ENCODE measurements at regions of chr4 and their contacts with region 1.

Region 1: DNA sequence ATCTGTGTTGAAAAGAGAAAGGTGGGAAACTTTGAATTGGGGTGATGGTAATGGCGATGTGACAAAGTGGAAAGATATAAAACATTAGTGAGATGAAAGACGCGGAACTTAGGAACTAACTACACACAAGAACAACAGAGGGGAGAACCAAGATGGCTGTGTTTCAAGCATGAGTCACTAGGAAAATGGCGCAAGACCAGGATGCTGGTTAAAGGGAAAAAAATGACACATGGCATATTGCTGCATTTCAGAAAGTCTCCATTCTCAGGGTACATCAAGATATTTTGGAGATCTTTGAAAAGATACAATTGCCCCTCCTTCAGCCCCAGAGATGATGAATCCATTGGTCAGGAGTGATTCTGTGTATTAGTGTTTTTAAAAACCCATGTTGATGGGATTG is 164.4 kb downstream of the FBXO8 start:
- DNase-seq: peak in 1 of 2 donors; percentile 32
- H3K4me3 ChIP-seq: peak overlapping the region in 1 of 4 donors; percentile 27
- H3K27ac ChIP-seq: peak overlapping the region in 1 of 5 donors; percentile 69
- H3K4me1 ChIP-seq: peaks cover 0 to 5% (median 0%) of the 10 kb centered on the region in 4 donors
- H3K27me3 ChIP-seq: peaks cover 0 to 10% (median 4%) of the 10 kb centered on the region in 3 donors
- CTCF ChIP-seq: no peak
- EP300 ChIP-seq: no peak
- POLR2A ChIP-seq: no peak

Region 2: DNA sequence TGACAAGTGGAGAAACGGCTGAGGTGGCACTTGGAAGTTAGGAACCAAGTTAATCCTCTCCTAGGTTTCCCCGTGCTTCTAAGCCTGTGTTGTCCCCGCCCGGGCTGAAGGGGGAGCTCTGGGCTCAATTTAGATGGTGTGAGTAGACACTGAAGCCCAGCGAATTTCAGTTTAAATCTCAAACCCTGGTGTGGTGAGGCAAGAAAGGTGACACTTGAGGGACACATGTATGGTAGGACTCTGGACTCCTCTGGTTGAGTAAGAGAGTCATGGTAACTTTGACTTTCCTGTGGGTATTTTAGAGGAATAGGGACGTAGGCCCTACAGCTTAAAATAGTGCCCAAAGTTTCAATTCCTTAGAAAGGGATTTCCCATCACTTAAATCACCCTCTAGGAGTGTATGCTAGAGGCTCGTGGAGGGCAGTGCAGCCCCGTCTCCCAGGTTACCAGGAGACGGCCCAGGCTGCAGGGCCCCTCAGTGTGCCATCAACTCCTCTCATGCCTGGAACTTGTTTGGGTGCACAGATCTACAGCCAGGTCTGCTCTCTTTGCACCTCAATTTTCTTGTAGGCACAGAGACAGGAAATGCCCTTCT is 613.0 kb before region 1 on chr4:
- intact Hi-C with region 1: loop called (anchors 10 kb)
- DNase-seq: peak; percentile 59 to 75
- H3K4me3 ChIP-seq: peak overlapping the region in 1 of 4 donors; percentile 11
- H3K27ac ChIP-seq: peak overlapping the region in 1 of 5 donors; percentile 47
- H3K4me1 ChIP-seq: peaks cover 10 to 68% (median 30%) of the 10 kb centered on the region in 4 donors
- H3K27me3 ChIP-seq: peaks cover 5 to 100% (median 98%) of the 10 kb centered on the region in 3 donors
- CTCF ChIP-seq: peak in 5 of 7 experiments; percentile 17 to 51 (median 44)
- EP300 ChIP-seq: no peak
- POLR2A ChIP-seq: no peak